Colonic mucosa (tissue), 4 donors: ENCODE measurements at regions of chr16 and their contacts with region 1.

Region 1: DNA sequence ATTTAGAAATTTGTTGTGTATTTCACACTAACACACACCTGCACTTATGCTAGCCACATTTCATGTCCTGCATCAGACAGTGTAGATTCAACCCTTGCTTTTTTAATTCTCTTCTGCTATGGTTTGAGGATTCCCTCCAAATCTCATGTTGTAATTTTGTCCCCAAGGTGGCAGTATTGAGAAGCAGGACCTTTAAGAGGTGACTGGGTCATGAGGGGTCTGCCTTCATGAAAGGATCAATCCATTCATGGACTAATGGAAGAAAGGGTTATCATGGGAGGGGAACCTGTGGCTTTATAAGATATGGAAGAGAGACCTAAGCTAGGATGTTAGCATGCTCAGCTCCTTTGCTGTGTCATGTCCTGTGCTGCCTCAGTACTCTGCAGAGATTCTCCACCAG is 1032.2 kb downstream of the CDH11 start:
- DNase-seq: no peak
- H3K4me3 ChIP-seq: no peak overlapping the region
- H3K27ac ChIP-seq: no peak overlapping the region
- H3K4me1 ChIP-seq: no peaks in the 10 kb centered on the region
- H3K27me3 ChIP-seq: no peaks in the 10 kb centered on the region
- CTCF ChIP-seq: no peak

Region 2: GRCh38 chr16:64004116-64004515 is 85.6 kb before region 1 on chr16:
- intact Hi-C with region 1: no loop called
- DNase-seq: no peak
- H3K4me3 ChIP-seq: no peak overlapping the region
- H3K27ac ChIP-seq: no peak overlapping the region
- H3K4me1 ChIP-seq: no peaks in the 10 kb centered on the region
- H3K27me3 ChIP-seq: no peaks in the 10 kb centered on the region
- CTCF ChIP-seq: no peak

Region 3: DNA sequence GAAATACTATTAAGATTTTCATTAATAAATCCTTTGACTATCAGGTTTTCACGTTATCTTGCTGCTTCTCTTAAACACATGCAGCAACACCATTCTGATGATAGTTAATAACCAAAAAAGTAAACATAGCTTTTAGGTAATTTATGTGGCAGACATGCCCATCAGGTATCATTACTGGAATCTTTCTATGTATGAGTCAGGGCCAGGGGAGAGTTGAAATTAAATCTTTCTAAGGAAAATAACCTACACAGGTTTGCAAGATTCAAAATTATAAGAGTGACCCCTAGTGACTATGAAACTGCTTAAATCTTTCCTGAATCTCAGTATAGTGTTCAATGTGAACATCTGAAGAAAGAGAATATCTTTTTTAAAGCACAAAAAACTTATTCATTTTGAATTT is 365.6 kb after region 1 on chr16:
- intact Hi-C with region 1: loop called (anchors 10 kb)
- DNase-seq: no peak
- H3K4me3 ChIP-seq: no peak overlapping the region
- H3K27ac ChIP-seq: no peak overlapping the region
- H3K4me1 ChIP-seq: no peaks in the 10 kb centered on the region
- H3K27me3 ChIP-seq: no peaks in the 10 kb centered on the region
- CTCF ChIP-seq: no peak